PC-9 (cell line): ENCODE measurements at regions of chr6 and their contacts with region 1.

Region 1: GRCh38 chr6:71404145-71404966 is 115.7 kb downstream of the OGFRL1 start:
- DNase-seq: peak; percentile 41 to 96
- H3K4me3 ChIP-seq: peak overlapping the region; percentile 48
- H3K27ac ChIP-seq: peak overlapping the region; percentile 98
- H3K4me1 ChIP-seq: peaks cover 90% of the 10 kb centered on the region
- H3K27me3 ChIP-seq: no peaks in the 10 kb centered on the region
- CTCF ChIP-seq: no peak

Region 2: GRCh38 chr6:70629929-70630328 is 774.4 kb before region 1 on chr6:
- CTCF ChIA-PET with region 1: no interaction called
- POLR2A ChIA-PET with region 1: no interaction called
- intact Hi-C with region 1: no loop called
- DNase-seq: no peak
- H3K4me3 ChIP-seq: no peak overlapping the region
- H3K27ac ChIP-seq: no peak overlapping the region
- H3K4me1 ChIP-seq: no peaks in the 10 kb centered on the region
- H3K27me3 ChIP-seq: no peaks in the 10 kb centered on the region
- CTCF ChIP-seq: no peak

Region 3: GRCh38 chr6:71420693-71421328 is 16.5 kb after region 1 on chr6:
- CTCF ChIA-PET with region 1: interaction called, 3 read pairs
- POLR2A ChIA-PET with region 1: interaction called, 3 read pairs
- intact Hi-C with region 1: loop called (anchors 1 kb)
- DNase-seq: peak; percentile 89 to 96
- H3K4me3 ChIP-seq: peak overlapping the region; percentile 81
- H3K27ac ChIP-seq: peak overlapping the region; percentile 48
- H3K4me1 ChIP-seq: peaks cover 30% of the 10 kb centered on the region
- H3K27me3 ChIP-seq: no peaks in the 10 kb centered on the region
- CTCF ChIP-seq: no peak

Region 4: GRCh38 chr6:71489747-71490315 is 85.5 kb after region 1 on chr6:
- CTCF ChIA-PET with region 1: no interaction called
- POLR2A ChIA-PET with region 1: interaction called, 4 read pairs
- intact Hi-C with region 1: loop called (anchors 1 kb)
- DNase-seq: peak; percentile 83 to 98
- H3K4me3 ChIP-seq: no peak overlapping the region
- H3K27ac ChIP-seq: peak overlapping the region; percentile 81
- H3K4me1 ChIP-seq: peaks cover 25% of the 10 kb centered on the region
- H3K27me3 ChIP-seq: no peaks in the 10 kb centered on the region
- CTCF ChIP-seq: no peak

Region 5: DNA sequence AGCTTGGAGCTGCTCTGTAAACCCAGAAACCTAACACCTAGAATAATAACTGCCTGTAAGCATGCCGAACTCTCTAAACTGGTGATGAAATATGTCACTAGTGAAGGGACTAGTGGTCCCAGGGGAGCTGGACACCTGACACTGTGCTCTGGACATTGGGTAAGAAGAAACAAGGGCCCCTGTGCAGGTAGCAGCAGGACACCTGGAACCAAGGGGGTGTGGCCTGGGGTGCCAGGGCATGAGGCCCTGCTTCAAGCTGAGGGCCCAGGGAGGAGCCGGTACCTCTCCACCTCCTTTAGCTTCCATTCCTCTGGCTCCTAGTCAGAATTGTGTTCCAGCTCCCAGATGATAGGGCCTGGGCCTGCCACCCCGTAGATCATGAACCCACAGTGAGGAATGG is 147.4 kb after region 1 on chr6:
- CTCF ChIA-PET with region 1: no interaction called
- POLR2A ChIA-PET with region 1: no interaction called
- intact Hi-C with region 1: no loop called
- DNase-seq: no peak
- H3K4me3 ChIP-seq: no peak overlapping the region
- H3K27ac ChIP-seq: no peak overlapping the region
- H3K4me1 ChIP-seq: no peaks in the 10 kb centered on the region
- H3K27me3 ChIP-seq: no peaks in the 10 kb centered on the region
- CTCF ChIP-seq: no peak

Region 6: DNA sequence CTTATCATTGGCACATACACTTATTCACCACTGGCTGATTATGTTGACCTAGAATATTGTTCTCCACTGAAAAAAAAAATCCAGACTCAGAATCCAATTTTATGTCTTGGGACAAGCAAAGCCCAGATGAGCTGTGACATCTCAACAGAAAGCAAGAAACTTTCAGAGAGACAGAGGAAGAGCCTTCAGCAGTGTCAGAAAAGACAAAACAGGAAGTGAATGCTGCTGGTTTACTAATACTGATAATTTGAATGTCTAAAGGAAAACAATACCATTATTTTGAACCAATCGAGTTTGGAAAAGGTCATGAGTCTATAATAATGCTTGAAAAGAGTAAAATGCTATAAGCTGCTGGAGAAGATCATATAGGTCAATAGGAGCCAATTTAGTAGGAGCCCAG is 302.2 kb after region 1 on chr6:
- CTCF ChIA-PET with region 1: no interaction called
- POLR2A ChIA-PET with region 1: no interaction called
- intact Hi-C with region 1: no loop called
- DNase-seq: no peak
- H3K4me3 ChIP-seq: no peak overlapping the region
- H3K27ac ChIP-seq: no peak overlapping the region
- H3K4me1 ChIP-seq: no peaks in the 10 kb centered on the region
- H3K27me3 ChIP-seq: no peaks in the 10 kb centered on the region
- CTCF ChIP-seq: no peak